ENCODE measurements at regions of chr20 and their contacts with region 1.

Region 1: DNA sequence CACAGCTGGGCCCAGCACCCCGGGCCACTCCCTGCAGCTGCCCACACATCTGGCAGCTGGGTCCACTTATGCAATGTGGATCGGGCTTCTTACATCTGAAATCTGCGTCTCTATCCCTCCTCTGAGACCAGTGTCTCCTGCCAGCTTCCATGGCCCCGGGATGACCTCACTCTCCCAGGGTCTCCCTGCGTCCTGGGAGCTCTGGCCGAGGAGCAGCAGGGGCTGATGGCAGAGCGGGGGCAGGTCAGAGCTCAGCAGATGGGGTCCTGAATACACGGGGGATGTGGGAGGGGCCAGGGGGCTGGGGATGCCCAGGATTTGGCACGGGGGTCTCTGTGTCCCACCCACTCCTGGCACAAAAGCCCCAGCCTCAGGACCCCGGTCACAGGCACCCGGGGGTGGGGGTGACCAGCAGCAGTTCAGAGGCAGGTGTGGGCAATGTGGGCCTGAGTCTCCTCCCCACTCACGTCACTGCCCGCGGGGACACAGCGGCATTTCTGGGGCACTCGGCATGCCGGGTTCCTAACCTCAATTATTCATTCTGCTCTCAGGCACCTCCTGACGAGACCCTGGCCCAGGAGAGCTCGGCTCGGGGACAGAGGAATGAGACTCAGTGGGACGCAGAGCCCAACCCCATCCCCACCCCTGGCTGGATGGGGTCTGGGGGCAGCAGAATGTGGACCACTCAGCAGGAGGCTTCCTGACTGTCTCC is 16.4 kb downstream of the CHRNA4 start:
- DNase-seq: no peak
- CTCF ChIP-seq: no peak

Region 2: DNA sequence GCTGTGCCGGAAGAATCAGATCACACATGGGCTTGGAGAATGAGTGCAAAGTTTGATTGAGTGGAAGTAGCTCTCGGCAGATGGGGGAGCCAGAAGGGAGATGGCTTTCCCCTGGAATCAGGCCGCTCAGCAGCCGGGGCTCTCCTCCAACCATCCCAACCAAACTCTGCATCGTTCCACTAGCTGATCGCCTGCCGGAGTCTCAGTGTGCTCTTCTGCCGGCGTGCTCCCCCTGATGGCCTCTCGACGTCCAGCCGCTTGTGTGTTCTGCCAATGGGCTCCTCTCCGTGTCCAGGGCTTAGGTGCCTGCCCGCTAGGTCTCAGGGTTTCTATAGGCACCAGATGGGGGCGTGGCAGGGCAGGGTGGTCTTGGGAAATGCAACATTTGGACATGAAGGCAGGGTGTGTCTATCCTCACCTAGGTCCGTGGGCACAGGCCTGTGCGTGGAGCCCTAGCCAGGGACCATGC is 113.9 kb before region 1 on chr20:
- in situ Hi-C with region 1: loop called (anchors 25 kb)
- DNase-seq: no peak
- CTCF ChIP-seq: peak; percentile 43